Cardiac septum (tissue), 1 donor: ENCODE measurements at regions of chr1 and their contacts with region 1.

Region 1: DNA sequence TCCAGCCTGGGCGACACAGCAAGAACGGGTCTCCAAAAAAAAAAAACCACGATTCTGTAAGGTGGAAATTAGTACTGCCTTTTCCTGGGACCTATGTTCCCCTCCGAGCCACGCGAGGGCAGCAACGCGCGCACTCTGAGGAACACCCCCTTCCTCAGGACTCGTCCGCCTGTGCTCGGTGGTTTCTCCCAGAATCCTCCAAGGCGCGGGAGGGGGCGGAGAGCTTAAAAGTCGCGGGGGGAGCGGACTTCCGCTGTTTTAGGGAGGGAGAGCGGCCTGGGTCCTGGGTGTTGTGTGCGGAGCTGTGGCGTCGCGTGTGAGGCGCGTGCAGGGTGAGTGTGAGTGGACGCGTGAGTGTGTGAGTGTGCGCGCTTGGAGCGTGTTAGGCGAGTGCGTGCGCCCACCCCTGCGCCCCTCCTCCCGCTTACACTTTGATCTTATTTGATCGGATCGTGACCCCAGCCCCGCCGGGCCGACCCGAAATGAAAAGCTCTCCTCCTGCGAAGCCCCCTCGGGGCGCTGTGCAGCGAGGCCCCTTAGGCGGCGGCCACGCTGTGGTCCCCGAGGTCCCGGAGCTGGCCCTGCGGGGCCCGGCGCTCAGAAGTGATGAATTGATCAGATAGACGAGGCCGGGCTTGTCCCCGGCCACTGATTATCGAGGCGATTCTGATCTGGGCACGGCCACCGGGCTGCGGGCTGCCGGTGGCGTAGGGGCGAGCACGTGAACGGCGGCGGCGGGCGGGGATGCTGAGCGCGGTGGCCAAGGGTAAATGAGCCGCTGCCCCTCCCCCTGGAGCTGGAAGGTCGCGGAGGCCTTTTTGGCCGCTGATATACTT is 9.6 kb downstream of the TMEM167B start:
- DNase-seq: peak; percentile 99

Region 2: GRCh38 chr1:108828022-108828961 is 271.9 kb before region 1 on chr1:
- intact Hi-C with region 1: loop called (anchors 10 kb)
- DNase-seq: peak; percentile 84

Region 3: DNA sequence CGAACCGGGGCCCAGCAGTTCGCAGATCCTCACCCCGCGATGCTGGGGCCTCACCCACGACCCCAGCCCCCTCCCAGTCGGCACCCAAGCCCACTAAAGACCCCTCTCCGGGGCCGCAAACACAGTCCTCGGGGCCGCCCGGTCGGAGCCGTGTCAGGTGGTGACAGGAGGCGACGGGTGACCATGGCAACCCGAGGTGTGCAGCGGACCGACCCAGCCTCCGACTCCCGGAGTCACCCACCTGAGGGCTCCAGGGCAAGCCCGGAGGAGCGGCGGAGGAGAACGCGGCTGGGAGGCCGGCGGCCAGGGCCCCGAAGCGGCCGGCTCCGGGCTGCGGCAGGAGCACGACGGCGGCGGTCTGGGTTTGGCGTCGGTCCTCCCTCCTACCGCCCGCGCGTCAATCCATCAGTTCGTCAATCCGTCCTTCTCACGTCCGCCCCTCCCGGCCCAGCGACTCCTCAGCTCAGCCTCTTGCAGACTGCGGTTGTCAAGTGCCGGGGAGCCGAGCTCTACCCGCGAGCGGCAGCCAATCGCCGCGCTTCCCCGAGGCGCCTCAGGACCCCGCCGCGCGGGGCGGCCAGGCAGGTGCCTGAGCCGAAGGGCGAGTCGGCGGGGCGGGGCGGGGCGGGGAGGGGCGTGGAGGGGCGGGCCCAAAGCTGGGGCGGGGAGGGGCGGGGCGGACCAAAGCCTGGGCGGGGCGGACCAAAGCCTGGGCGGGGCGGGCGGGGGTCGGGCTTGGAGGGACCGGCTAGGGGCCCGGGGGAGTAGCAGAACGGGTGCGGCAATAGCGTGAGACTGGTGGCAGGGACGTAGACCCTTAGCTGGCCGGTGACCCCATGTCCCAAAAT is 58.3 kb before region 1 on chr1 and contains the start of gene WDR47:
- intact Hi-C with region 1: loop called (anchors 1 kb)
- DNase-seq: peak; percentile 99
- total RNA-seq, gene WDR47: 15.7 TPM

Region 4: DNA sequence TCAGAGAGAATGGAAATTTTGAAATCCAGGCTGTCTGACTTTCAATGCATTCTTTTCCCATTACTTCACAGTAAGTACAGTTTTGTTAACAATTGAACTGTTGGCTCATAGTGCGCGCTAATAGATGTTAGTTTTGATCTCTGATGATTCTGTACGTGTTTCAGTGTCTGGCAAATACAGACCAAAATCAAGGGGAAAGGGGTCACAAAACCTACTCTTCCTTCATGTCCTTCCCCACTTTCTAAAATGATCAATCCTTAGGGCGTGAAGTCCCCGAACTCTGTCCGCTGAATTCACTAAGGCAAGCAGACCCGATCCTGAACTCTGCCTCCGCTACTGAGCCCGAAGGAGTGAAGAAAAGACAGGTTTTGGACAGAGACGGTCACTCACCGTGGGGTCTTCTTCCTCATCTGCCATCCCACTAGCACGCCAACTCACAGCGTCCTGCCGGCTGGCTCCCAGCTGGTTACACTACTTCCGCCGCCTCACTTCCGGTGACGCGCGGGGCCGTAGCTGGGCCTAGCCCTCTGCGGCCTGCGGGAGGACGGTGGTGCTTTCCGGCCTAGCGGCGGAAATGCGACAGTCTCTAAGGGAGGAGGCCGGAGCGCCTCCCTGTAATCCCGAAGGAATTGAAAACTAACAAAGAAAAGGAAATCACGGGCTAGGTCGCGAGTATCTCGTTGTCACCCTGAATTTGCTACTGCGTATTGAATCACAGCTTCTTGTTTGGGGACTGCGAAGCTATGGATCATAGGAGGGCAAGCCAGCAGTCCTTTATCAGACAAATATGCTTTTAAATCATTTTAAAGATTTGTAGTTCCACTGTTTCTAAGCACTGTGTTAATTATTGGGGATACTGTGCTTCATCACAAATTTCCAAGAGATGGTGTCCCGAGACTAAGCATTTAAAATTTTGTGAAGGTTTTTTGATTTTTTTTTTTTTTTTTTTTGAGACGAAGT is 24.3 kb before region 1 on chr1 and contains the start of gene TAF13:
- intact Hi-C with region 1: loop called (anchors 1 kb)
- DNase-seq: peak; percentile 99
- total RNA-seq, gene TAF13: 65.0 TPM

Region 5: DNA sequence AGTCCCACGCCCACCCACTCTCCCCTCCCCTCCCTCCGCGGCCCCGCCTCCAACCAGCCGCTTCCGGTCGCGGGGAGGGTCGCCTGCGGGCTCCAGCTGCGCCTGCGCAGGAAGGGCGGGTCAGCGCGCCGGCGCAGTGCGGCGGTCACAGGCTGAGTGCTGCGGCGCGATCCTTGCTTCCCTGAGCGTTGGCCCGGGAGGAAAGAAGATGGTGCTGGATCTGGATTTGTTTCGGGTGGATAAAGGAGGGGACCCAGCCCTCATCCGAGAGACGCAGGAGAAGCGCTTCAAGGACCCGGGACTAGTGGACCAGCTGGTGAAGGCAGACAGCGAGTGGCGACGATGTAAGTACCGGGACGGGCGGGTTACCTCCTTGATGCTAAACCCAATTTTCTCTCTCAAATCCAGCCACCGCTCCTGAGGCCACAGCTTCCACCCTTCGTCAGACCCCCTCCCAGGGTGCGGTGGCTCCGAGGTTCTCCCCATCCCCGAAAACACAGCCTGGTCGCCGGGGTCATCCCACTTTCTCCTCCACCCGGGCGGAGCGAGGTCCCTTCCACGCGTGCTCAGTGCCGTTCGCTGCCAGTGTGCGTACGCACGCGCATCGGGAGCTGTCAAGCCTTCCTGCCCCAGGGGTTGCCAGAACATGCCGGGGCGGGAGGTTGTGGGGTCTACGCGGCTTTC is 113.8 kb after region 1 on chr1 and contains the start of gene SARS1:
- intact Hi-C with region 1: loop called (anchors 5 kb)
- DNase-seq: peak; percentile 95
- total RNA-seq, gene SARS1: 104 TPM

Region 6: DNA sequence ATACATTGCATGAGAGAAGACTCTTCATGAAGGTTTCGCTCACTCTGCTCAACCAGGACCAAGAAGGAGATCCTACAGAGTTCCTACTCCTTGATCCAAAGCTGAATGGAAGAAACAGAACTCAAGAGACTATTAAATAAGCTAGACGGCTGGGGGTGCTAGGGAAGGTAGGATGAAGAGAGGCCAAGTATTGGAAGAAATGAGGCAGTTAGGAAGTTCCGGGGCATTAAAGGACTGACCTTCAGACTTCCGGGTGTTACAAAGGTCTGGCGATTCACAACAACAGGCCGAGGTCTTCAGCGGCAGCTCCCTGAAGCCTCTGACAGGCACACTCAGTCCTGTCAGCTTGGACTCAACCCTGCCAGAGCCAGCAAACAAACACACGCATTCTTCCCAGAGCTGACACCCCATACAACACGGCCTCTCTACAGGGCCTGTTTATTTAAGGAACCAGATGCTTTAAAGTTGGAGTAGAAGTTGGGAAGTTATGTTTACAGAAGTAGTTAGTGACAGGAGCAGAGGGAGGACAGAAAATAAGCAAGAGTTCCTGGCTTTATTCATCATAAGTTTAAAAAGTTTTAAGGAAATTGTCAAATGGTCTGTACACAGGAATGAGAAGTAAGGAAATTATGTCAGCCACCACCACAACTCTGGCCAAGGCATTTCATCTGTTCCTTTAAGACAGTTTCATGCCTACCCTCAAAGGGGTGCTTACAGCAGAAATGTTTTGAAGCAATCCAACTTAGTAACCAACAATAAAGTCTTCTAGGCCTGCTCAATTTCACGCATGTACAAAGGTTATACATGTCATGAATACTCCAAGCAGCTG is 292.8 kb after region 1 on chr1:
- intact Hi-C with region 1: no loop called
- DNase-seq: peak; percentile 85